ENCODE measurements at regions of chr13 and their contacts with region 1.

Region 1: DNA sequence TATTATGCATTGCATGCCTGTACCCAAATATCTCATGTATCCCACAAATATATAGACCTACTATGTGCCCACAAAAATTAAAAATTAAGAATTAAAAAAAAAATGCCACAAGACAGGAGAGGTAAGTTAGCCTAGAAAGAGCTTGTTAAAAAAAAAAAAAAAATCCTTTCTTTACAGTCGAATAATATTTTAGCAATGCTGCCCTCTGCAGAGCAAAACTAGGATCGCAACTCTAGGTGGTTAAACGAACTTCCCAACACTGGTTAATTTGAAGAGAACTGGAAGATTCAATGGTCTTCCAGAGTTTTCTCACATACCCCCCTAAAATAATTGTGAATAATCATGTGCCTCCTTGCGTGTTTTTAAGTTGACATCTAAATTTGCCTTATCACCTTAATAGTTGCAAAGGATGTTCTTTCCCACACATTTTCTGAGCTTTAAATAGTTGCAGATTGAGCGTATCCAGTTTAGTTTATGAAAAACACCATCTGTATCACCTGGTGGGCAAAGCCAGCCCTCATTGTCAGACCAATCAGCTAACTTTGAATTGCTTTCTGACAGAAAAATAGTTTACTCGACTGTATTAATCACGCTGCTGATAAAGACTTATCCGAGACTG is 47.4 kb upstream of the RCBTB2 start:
- DNase-seq: peak in 4 of 5 donors; percentile 59 to 77 (median 68)
- ATAC-seq: peak; percentile 29 to 56 (median 44)
- H3K4me3 ChIP-seq: no peak overlapping the region
- H3K27ac ChIP-seq: peak overlapping the region in 4 of 12 donors; percentile 1 to 93 (median 37)
- H3K4me1 ChIP-seq: peaks cover 0 to 68% (median 25%) of the 10 kb centered on the region in 12 donors
- H3K27me3 ChIP-seq: no peaks in the 10 kb centered on the region
- CTCF ChIP-seq: peak; percentile 55 to 88 (median 82)
- POLR2A ChIP-seq: no peak

Region 2: DNA sequence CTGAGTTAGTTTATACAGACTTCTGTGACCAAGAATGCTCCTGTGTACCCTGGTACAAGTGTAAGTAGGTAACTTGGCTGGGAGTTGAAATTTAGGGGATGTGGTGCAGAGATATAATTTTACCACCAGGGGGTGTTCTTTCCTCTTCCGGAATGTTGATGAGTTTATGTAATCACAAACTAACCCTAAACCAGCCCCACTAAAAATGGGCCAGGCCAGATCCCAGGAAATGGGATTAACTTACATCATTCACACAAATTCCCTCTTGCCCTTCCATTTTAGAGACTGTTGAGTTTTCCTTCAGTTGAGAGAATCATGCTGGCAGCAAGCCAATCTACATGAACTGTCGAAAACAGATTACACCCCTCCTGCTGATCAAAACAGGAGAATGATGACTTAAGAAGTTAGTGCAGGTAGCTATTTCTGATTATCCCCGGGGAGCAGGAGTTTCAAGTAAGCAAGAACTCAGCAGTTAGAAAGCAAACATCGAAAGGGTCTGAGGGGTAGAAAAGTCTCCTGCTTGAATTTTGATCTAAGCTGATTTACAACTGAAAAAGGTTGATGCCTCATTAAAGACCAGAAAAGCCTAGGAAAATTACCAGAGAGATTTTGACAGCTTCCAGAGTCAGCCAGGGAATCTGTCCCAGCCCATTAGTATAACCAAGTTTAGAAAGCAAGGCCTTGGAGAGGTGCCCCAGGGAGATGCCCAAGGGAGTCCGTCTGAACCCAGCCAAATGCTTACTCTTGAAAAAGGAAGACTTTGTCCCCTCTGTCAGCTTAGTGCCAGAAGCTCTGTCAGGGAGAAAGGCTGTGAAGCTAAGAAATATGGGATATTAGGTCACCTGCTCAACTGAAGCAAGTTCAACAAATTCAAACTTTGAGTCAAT is 453.1 kb before region 1 on chr13:
- intact Hi-C with region 1: loop called in 6 of 10 experiments (anchors 2 to 10 kb)
- DNase-seq: peak; percentile 53 to 78 (median 76)
- ATAC-seq: peak; percentile 56 to 82 (median 74)
- H3K4me3 ChIP-seq: peak overlapping the region in 1 of 12 donors; percentile 6
- H3K27ac ChIP-seq: peak overlapping the region; percentile 75 to 96 (median 90)
- H3K4me1 ChIP-seq: peaks cover 0 to 51% (median 40%) of the 10 kb centered on the region in 12 donors
- H3K27me3 ChIP-seq: no peaks in the 10 kb centered on the region
- CTCF ChIP-seq: peak; percentile 60 to 86 (median 75)
- POLR2A ChIP-seq: no peak

Region 3: GRCh38 chr13:48275507-48275906 is 304.8 kb before region 1 on chr13:
- intact Hi-C with region 1: no loop called
- DNase-seq: no peak
- ATAC-seq: no peak
- H3K4me3 ChIP-seq: no peak overlapping the region
- H3K27ac ChIP-seq: no peak overlapping the region
- H3K4me1 ChIP-seq: peaks cover 0 to 9% (median 0%) of the 10 kb centered on the region in 12 donors
- H3K27me3 ChIP-seq: no peaks in the 10 kb centered on the region
- CTCF ChIP-seq: no peak
- POLR2A ChIP-seq: no peak

Region 4: GRCh38 chr13:48334534-48335127 is 245.7 kb before region 1 on chr13:
- intact Hi-C with region 1: loop called (anchors 1 to 5 kb)
- DNase-seq: no peak
- ATAC-seq: peak in 2 of 4 donors; percentile 53 to 69
- H3K4me3 ChIP-seq: no peak overlapping the region
- H3K27ac ChIP-seq: no peak overlapping the region
- H3K4me1 ChIP-seq: peaks cover 0 to 15% (median 6%) of the 10 kb centered on the region in 12 donors
- H3K27me3 ChIP-seq: no peaks in the 10 kb centered on the region
- CTCF ChIP-seq: peak; percentile 53 to 78 (median 72)
- POLR2A ChIP-seq: no peak

Region 5: GRCh38 chr13:48437371-48437770 is 142.9 kb before region 1 on chr13:
- intact Hi-C with region 1: loop called in 1 of 10 experiments (anchors 10 kb)
- DNase-seq: peak; percentile 77 to 82 (median 78)
- ATAC-seq: peak; percentile 80 to 98 (median 92)
- H3K4me3 ChIP-seq: peak overlapping the region in 5 of 12 donors; percentile 1 to 24 (median 2)
- H3K27ac ChIP-seq: peak overlapping the region in 11 of 12 donors; percentile 8 to 91 (median 47)
- H3K4me1 ChIP-seq: peaks cover 0 to 73% (median 25%) of the 10 kb centered on the region in 12 donors
- H3K27me3 ChIP-seq: no peaks in the 10 kb centered on the region
- CTCF ChIP-seq: no peak
- POLR2A ChIP-seq: no peak

Region 6: GRCh38 chr13:48505597-48506091 is 74.7 kb before region 1 on chr13:
- intact Hi-C with region 1: loop called in 1 of 10 experiments (anchors 10 kb)
- DNase-seq: peak in 4 of 5 donors; percentile 47 to 70 (median 62)
- ATAC-seq: peak; percentile 69 to 84 (median 72)
- H3K4me3 ChIP-seq: peak overlapping the region in 7 of 12 donors; percentile 1 to 30 (median 23)
- H3K27ac ChIP-seq: peak overlapping the region; percentile 62 to 96 (median 82)
- H3K4me1 ChIP-seq: peaks cover 0 to 79% (median 29%) of the 10 kb centered on the region in 12 donors
- H3K27me3 ChIP-seq: no peaks in the 10 kb centered on the region
- CTCF ChIP-seq: no peak
- POLR2A ChIP-seq: no peak

Region 7: GRCh38 chr13:49082653-49083536 is 502.6 kb after region 1 on chr13:
- intact Hi-C with region 1: no loop called
- DNase-seq: no peak
- ATAC-seq: peak in 1 of 4 donors; percentile 13
- H3K4me3 ChIP-seq: no peak overlapping the region
- H3K27ac ChIP-seq: no peak overlapping the region
- H3K4me1 ChIP-seq: peaks cover 0 to 16% (median 0%) of the 10 kb centered on the region in 12 donors
- H3K27me3 ChIP-seq: no peaks in the 10 kb centered on the region
- CTCF ChIP-seq: no peak
- POLR2A ChIP-seq: no peak